PC-3 (cell line): ENCODE measurements at regions of chr3 and their contacts with region 1.

Region 1: DNA sequence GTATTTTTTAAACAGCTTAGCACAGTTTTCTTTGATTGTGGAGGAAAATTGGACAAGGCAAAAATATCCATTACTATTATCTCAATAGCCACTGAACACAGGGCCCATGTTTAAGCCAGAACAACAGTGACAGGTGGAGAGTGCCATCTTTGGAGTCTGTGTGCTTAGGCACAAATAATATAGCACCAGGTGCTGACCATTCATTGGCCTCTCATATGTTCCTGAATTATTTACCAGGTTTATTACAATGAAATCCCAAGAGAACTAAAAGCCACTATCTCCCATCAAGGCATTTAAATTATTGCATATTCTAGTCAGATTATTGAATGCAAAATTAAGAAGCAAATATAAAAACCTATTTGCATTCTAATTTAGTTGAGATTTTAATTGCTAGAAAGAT is 39.6 kb downstream of the GPR156 start:
- DNase-seq: no peak
- ATAC-seq: no peak
- H3K4me3 ChIP-seq: no peak overlapping the region
- H3K27ac ChIP-seq: no peak overlapping the region
- H3K4me1 ChIP-seq: no peaks in the 10 kb centered on the region
- H3K27me3 ChIP-seq: no peaks in the 10 kb centered on the region
- CTCF ChIP-seq: no peak

Region 2: DNA sequence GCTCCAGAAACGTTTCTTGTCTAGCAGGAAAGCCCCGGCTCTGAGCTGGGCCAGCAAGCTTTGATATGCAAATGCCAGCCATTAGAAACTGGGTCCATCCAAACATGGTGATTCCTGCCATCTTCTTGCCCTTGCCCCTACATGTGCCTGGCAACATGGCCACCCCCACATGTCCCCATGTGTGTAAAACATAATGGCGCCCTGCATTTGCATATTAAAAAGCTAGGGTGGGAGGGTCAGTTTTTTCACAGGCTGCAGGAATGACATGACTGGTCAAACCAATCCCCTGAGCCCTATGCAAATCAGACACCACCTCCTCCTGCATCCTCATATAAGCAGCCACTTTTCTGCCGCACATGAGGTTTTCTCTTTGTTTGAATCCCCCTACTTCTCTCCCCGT is 18.4 kb after region 1 on chr3:
- CTCF ChIA-PET with region 1: interaction called, 16 read pairs
- POLR2A ChIA-PET with region 1: no interaction called
- intact Hi-C with region 1: no loop called
- DNase-seq: no peak
- ATAC-seq: no peak
- H3K4me3 ChIP-seq: no peak overlapping the region
- H3K27ac ChIP-seq: no peak overlapping the region
- H3K4me1 ChIP-seq: no peaks in the 10 kb centered on the region
- H3K27me3 ChIP-seq: no peaks in the 10 kb centered on the region
- CTCF ChIP-seq: no peak

Region 3: DNA sequence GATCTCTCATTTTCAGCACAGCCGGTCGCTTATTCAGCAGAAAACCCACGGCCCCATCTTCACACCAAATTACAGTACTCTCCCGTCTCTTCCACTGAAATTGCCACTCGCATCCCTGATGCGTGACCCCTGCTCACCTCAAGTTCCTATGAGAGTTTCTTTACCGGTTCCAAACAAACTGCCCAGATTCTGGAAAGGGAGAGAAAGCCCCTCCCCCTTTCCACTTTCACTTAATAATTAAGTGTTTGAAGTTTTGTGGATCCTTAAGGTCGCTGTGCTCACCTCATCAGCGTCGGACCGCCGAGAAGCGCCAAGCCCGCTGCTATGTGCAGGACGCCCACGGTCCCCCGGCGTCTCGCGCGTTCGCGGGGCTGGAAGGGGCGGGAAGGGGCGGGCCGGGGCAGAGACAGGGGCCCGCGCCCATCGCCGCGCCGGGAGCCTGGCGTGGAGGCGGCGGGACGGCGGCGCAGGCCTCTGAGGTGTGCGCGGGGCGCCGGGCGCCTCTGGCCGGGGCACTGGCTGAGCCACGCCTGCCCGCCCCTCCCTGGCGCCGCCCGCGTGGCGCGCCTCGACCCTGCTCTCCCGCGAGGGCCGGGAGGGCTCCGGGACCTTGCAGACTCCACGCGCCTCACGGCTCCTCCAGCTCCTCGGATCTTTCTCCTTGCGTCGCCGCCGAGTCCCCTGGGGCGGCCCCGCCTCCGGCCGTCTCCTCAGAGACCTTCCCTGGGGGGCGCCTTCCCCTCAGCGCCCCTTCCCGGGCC is 39.5 kb after region 1 on chr3 and contains the start of gene GPR156:
- CTCF ChIA-PET with region 1: no interaction called
- POLR2A ChIA-PET with region 1: no interaction called
- intact Hi-C with region 1: no loop called
- DNase-seq: peak; percentile 54
- ATAC-seq: peak; percentile 87
- H3K4me3 ChIP-seq: peak within 1 kb of the TSS; percentile 79
- H3K27ac ChIP-seq: no peak within 1 kb of the TSS
- H3K4me1 ChIP-seq: peaks cover 9% of the 10 kb centered on the region; the same call in 1 of the 2 replicates
- H3K27me3 ChIP-seq: no peaks in the 10 kb centered on the region
- CTCF ChIP-seq: no peak
- total RNA-seq, gene GPR156: 5.1 and 7.7 TPM in 2 replicates

Region 4: DNA sequence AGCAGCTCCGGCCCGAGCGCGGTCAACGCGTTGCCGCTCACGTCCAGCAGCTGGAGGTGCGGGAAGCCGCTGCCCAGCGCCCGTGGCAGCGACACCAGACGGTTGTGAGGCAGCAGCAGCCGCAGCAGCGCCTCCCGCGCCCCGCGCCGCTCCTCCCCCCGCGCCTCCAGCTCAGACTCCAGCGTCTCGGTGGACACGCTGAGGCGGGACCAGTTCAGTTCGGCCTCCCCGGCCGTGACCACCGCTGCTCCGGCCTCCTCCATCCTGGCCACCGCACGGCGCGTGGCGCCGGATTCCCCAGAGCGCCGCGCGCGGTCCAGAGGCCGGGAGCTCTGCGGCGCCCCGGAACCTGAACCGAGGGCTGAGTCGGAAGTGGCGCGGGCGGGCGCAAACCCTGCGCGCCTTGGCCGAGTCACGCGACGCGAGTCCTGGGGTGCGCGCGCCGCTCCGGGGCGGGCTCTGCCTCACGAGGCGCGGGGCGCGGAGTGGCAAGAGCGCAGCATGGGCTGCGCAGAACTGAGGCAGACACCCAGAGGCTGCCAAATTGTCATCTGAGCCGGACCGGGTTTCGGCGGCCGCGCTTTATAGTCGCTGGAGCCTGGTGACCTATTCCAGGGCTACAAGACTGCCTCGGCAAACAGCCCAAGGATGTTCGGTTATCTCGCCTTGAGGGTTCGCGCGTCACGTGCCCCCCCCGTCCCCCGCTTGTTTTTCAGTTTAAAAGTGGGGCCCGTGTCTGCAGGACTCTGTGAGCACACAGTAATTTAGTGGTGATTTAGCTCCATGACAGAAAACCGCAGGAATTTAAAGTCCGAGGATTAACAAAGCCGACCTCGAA is 103.8 kb after region 1 on chr3 and contains the start of gene LRRC58:
- CTCF ChIA-PET with region 1: interaction called, 3 read pairs
- POLR2A ChIA-PET with region 1: no interaction called
- intact Hi-C with region 1: loop called (anchors 2 kb)
- DNase-seq: peak; percentile 99
- ATAC-seq: peak; percentile 91
- H3K4me3 ChIP-seq: peak within 1 kb of the TSS; percentile 74
- H3K27ac ChIP-seq: peak within 1 kb of the TSS; percentile 51
- H3K4me1 ChIP-seq: peaks cover 41% of the 10 kb centered on the region
- H3K27me3 ChIP-seq: no peaks in the 10 kb centered on the region
- CTCF ChIP-seq: peak; percentile 52
- total RNA-seq, gene LRRC58: 33.7 and 35.2 TPM in 2 replicates

Region 5: GRCh38 chr3:120357807-120358206 is 112.4 kb after region 1 on chr3:
- CTCF ChIA-PET with region 1: no interaction called
- POLR2A ChIA-PET with region 1: no interaction called
- intact Hi-C with region 1: loop called (anchors 1 kb)
- DNase-seq: no peak
- ATAC-seq: peak; percentile 57; the same call in 1 of the 2 replicates
- H3K4me3 ChIP-seq: no peak overlapping the region
- H3K27ac ChIP-seq: no peak overlapping the region
- H3K4me1 ChIP-seq: no peaks in the 10 kb centered on the region
- H3K27me3 ChIP-seq: no peaks in the 10 kb centered on the region
- CTCF ChIP-seq: peak; percentile 21; the same call in 1 of the 2 replicates